ENCODE measurements at regions of chr3 and their contacts with region 1.

Region 1: GRCh38 chr3:148709560-148710253 is 12.0 kb downstream of the AGTR1 start:
- DNase-seq: no peak
- H3K4me3 ChIP-seq: no peak overlapping the region
- H3K27ac ChIP-seq: no peak overlapping the region
- H3K4me1 ChIP-seq: no peaks in the 10 kb centered on the region
- CTCF ChIP-seq: no peak

Region 2: DNA sequence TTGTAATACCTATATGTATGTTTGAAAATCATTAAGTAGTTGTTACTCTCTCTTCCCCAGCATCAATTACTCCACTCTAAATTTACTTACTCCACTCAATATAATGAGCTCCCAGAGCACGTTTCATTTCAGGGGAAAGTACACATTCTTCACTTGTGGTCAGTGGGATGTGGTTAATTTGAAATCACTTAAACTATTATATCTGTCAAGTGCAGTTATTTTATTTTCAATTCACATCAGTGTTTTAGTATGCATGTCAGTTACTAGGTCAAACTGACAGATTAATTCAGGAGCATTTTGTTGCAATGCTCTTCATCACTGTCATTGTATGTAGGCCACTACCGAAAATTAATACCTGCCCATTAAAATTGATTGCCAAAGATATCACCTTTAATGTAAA is 1679.4 kb before region 1 on chr3:
- CTCF ChIA-PET with region 1: no interaction called
- POLR2A ChIA-PET with region 1: interaction called, 14 read pairs
- intact Hi-C with region 1: no loop called
- DNase-seq: no peak
- H3K4me3 ChIP-seq: no peak overlapping the region
- H3K27ac ChIP-seq: no peak overlapping the region
- H3K4me1 ChIP-seq: no peaks in the 10 kb centered on the region
- CTCF ChIP-seq: no peak